PC-9 (cell line): ENCODE measurements at regions of chr3 and their contacts with region 1.

Region 1: DNA sequence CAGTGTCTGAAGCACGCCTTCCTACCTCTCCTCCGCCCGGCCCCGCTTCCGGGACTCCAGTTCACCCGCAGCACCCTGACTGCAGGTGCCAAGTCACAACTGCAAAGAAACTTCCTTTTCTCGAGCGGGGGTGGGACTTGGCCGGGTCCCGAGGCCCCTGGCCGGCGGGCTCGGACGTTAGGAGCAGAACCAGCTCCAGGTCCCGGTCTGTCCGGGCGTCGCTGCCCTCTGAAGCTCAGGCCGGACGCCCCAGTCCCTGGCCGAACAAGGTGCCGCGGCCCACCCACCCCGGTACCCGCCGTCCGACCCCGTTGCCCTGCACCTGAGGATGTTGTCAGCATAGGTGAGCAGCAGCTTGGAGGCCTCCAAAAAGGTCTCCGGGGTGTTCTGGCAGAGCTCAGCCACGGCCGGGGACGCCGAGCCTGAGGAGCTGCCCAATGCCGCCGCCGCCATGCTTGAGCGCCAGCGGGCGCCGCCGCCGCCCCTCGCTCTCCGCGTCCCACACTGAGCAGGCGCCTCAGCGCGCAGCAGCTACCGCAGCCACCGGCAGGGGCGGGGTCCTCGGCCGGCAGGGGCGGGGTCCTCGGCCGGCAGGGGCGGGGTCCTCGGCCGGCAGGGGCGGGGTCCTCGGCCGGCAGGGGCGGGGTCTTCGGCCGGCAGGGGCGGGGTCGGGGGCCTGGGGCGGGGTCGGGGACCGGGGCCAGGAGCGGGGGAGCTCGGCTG is at the start of gene NGLY1:
- DNase-seq: peak; percentile 52 to 81
- H3K4me3 ChIP-seq: peak within 1 kb of the TSS; percentile 82
- H3K27ac ChIP-seq: peak within 1 kb of the TSS; percentile 42
- H3K4me1 ChIP-seq: peaks cover 24% of the 10 kb centered on the region
- H3K27me3 ChIP-seq: no peaks in the 10 kb centered on the region
- CTCF ChIP-seq: no peak
- total RNA-seq, gene NGLY1: 26.3 and 29.4 TPM in 2 replicates

Region 2: GRCh38 chr3:25664810-25665314 is 118.2 kb before region 1 on chr3 and contains the start of gene TOP2B:
- CTCF ChIA-PET with region 1: no interaction called
- POLR2A ChIA-PET with region 1: no interaction called
- intact Hi-C with region 1: loop called (anchors 2 kb)
- DNase-seq: peak; percentile 82 to 92
- H3K4me3 ChIP-seq: peak within 1 kb of the TSS; percentile 89
- H3K27ac ChIP-seq: peak within 1 kb of the TSS; percentile 64
- H3K4me1 ChIP-seq: peaks cover 17% of the 10 kb centered on the region
- H3K27me3 ChIP-seq: no peaks in the 10 kb centered on the region
- CTCF ChIP-seq: no peak
- total RNA-seq, gene TOP2B: 80.1 and 106 TPM in 2 replicates

Region 3: DNA sequence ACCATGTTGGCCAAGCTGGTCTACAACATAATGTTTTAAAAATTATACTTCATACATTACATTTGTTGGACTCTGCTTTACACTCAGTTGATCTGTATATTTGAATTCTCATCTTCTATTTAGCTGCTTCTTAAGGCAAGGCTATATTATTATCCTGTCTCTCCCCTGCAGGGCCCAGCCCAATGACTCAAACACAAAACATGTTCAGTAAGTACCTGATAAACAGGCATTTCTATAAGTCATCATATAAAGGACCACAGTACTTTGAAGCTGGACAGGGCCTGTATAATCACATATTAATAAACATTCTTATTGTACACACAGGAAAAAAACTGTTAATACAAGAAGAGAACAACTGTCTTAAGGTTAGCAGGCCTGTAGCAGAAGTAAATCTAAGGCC is 36.1 kb before region 1 on chr3:
- CTCF ChIA-PET with region 1: no interaction called
- POLR2A ChIA-PET with region 1: no interaction called
- intact Hi-C with region 1: no loop called
- DNase-seq: no peak
- H3K4me3 ChIP-seq: no peak overlapping the region
- H3K27ac ChIP-seq: no peak overlapping the region
- H3K4me1 ChIP-seq: peaks cover 7% of the 10 kb centered on the region
- H3K27me3 ChIP-seq: no peaks in the 10 kb centered on the region
- CTCF ChIP-seq: no peak

Region 4: GRCh38 chr3:25856902-25857518 is 73.9 kb after region 1 on chr3:
- CTCF ChIA-PET with region 1: interaction called, 25 read pairs
- POLR2A ChIA-PET with region 1: no interaction called
- intact Hi-C with region 1: loop called (anchors 5 kb)
- DNase-seq: no peak
- H3K4me3 ChIP-seq: no peak overlapping the region
- H3K27ac ChIP-seq: no peak overlapping the region
- H3K4me1 ChIP-seq: peaks cover 24% of the 10 kb centered on the region
- H3K27me3 ChIP-seq: no peaks in the 10 kb centered on the region
- CTCF ChIP-seq: peak; percentile 70

Region 5: GRCh38 chr3:25897019-25897418 is 113.9 kb after region 1 on chr3:
- CTCF ChIA-PET with region 1: interaction called, 10 read pairs
- POLR2A ChIA-PET with region 1: no interaction called
- intact Hi-C with region 1: no loop called
- DNase-seq: peak in 1 of 2 experiments; percentile 27
- H3K4me3 ChIP-seq: no peak overlapping the region
- H3K27ac ChIP-seq: no peak overlapping the region
- H3K4me1 ChIP-seq: no peaks in the 10 kb centered on the region
- H3K27me3 ChIP-seq: no peaks in the 10 kb centered on the region
- CTCF ChIP-seq: peak; percentile 55; the same call in 1 of the 2 replicates